HepG2 (cell line): ENCODE measurements at regions of chr9 and their contacts with region 1.

Region 1: GRCh38 chr9:105191508-105192121 is 52.8 kb upstream of the SLC44A1 start:
- DNase-seq: peak; percentile 95
- ATAC-seq: peak; percentile 94
- H3K4me3 ChIP-seq: no peak overlapping the region; a peak in 1 of 6 replicates
- H3K27ac ChIP-seq: peak overlapping the region; percentile 67
- H3K4me1 ChIP-seq: peaks cover 57% of the 10 kb centered on the region
- H3K27me3 ChIP-seq: no peaks in the 10 kb centered on the region
- CTCF ChIP-seq: no peak
- EP300 ChIP-seq: peak; percentile 89 to 91
- POLR2A ChIP-seq: no peak
- RAD21 ChIP-seq: no peak

Region 2: GRCh38 chr9:105238302-105238701 is 46.7 kb after region 1 on chr9:
- CTCF ChIA-PET with region 1: no interaction called
- POLR2A ChIA-PET with region 1: no interaction called
- in situ Hi-C with region 1: no loop called
- intact Hi-C with region 1: loop called (anchors 5 kb)
- DNase-seq: no peak
- ATAC-seq: no peak
- H3K4me3 ChIP-seq: no peak overlapping the region
- H3K27ac ChIP-seq: no peak overlapping the region
- H3K4me1 ChIP-seq: peaks cover 39% of the 10 kb centered on the region
- H3K27me3 ChIP-seq: no peaks in the 10 kb centered on the region
- CTCF ChIP-seq: no peak
- EP300 ChIP-seq: no peak
- POLR2A ChIP-seq: no peak
- RAD21 ChIP-seq: no peak